K562 (cell line): ENCODE measurements at regions of chr1 and their contacts with region 1.

Region 1: DNA sequence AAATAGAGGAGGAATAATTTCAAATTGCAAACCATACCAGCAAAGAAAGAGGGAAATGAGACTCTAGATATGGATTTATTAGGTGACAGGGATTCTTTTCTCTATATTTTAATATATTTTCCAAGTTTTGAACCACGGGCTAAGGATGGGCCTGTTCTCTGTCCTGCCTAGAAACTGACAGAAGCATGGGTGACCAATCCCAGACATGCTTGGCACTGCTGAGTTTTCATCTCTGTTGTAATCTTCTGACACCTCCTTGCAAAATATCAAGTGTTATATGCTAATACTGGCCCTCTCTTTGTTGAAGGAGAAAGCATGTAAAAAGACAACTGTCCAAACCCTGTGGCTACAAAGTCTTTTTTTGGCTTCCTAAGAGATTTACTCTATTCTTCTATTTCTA is 774 bp upstream of the ANGPTL7 start:
- DNase-seq: no peak
- ATAC-seq: no peak
- H3K4me3 ChIP-seq: no peak overlapping the region
- H3K27ac ChIP-seq: no peak overlapping the region
- H3K4me1 ChIP-seq: no peaks in the 10 kb centered on the region
- H3K27me3 ChIP-seq: no peaks in the 10 kb centered on the region
- CTCF ChIP-seq: no peak
- EP300 ChIP-seq: no peak
- POLR2A ChIP-seq: no peak
- RAD21 ChIP-seq: no peak

Region 2: GRCh38 chr1:11126569-11126968 is 61.8 kb before region 1 on chr1:
- CTCF ChIA-PET with region 1: no interaction called
- POLR2A ChIA-PET with region 1: no interaction called
- in situ Hi-C with region 1: no loop called
- intact Hi-C with region 1: no loop called
- DNase-seq: peak in 1 of 4 experiments; percentile 39
- ATAC-seq: peak; percentile 51; the same call in 1 of the 3 replicates
- H3K4me3 ChIP-seq: no peak overlapping the region
- H3K27ac ChIP-seq: no peak overlapping the region
- H3K4me1 ChIP-seq: no peaks in the 10 kb centered on the region
- H3K27me3 ChIP-seq: no peaks in the 10 kb centered on the region
- CTCF ChIP-seq: no peak
- EP300 ChIP-seq: no peak
- POLR2A ChIP-seq: no peak
- RAD21 ChIP-seq: no peak

Region 3: GRCh38 chr1:11178021-11179015 is 10.1 kb before region 1 on chr1:
- CTCF ChIA-PET with region 1: no interaction called
- POLR2A ChIA-PET with region 1: interaction called, 18 read pairs
- in situ Hi-C with region 1: no loop called
- intact Hi-C with region 1: no loop called
- DNase-seq: peak in 1 of 4 experiments; percentile 52
- ATAC-seq: peak; percentile 50; the same call in 1 of the 3 replicates
- H3K4me3 ChIP-seq: no peak overlapping the region
- H3K27ac ChIP-seq: no peak overlapping the region
- H3K4me1 ChIP-seq: peaks cover 0 to 13% of the 10 kb centered on the region in 2 experiments; a peak in 4 of 5 replicates
- H3K27me3 ChIP-seq: no peaks in the 10 kb centered on the region
- CTCF ChIP-seq: no peak
- EP300 ChIP-seq: peak; percentile 54; the same call in 1 of the 2 replicates
- POLR2A ChIP-seq: no peak
- RAD21 ChIP-seq: no peak

Region 4: DNA sequence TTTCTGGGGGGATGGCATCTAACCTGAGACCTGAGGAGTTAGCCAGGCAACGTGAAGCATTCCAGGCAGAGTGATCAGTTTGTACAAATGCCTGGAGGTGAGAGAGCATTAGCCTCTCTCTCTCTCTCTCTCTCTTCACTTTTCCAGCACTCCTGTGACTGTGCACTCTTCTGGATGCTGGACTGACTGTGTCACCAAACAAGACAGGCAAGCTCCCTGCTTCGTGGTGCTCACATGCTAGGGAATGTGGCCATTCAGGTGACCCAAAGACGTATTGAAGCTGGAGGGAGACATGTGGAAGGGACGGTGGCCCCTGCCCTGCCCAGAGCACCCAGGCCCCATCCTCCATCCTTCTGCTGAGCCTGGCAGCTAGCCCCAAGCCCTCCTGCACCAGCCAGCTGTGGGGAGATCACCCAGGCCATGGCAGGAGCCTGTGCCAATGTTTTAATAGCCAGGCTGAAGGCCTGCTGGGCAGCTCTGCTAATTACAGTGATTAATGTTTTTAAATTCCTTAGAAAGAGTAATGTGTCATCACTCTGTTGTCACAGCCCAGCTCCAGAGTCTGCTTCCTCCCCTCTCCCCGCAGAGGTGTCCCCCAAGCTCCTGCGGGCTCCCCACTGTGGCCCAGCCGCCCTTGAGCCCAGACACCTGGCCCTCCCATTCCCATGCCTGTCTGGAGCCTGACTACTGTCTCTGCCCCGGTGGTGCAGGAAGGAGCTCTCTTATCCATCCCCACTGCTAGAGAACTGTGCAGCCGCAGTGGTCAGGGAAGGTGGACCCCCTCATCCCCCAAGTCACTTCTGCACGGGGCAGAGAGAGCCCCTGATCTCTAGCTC is 133.5 kb after region 1 on chr1:
- CTCF ChIA-PET with region 1: no interaction called
- POLR2A ChIA-PET with region 1: no interaction called
- in situ Hi-C with region 1: no loop called
- intact Hi-C with region 1: no loop called
- DNase-seq: no peak
- ATAC-seq: no peak
- H3K4me3 ChIP-seq: no peak overlapping the region
- H3K27ac ChIP-seq: no peak overlapping the region; the same call in 2 of the 3 replicates
- H3K4me1 ChIP-seq: peaks cover 0 to 11% of the 10 kb centered on the region in 2 experiments; a peak in 2 of 5 replicates
- H3K27me3 ChIP-seq: peaks cover 32 to 63% of the 10 kb centered on the region in 2 experiments
- CTCF ChIP-seq: no peak
- EP300 ChIP-seq: no peak
- POLR2A ChIP-seq: no peak
- RAD21 ChIP-seq: no peak